Left cardiac atrium (tissue), 4 donors: ENCODE measurements at regions of chr4 and their contacts with region 1.

Region 1: GRCh38 chr4:81405894-81406401 is 65.8 kb downstream of the RASGEF1B start:
- DNase-seq: no peak
- ATAC-seq: peak; percentile 85 to 92

Region 2: DNA sequence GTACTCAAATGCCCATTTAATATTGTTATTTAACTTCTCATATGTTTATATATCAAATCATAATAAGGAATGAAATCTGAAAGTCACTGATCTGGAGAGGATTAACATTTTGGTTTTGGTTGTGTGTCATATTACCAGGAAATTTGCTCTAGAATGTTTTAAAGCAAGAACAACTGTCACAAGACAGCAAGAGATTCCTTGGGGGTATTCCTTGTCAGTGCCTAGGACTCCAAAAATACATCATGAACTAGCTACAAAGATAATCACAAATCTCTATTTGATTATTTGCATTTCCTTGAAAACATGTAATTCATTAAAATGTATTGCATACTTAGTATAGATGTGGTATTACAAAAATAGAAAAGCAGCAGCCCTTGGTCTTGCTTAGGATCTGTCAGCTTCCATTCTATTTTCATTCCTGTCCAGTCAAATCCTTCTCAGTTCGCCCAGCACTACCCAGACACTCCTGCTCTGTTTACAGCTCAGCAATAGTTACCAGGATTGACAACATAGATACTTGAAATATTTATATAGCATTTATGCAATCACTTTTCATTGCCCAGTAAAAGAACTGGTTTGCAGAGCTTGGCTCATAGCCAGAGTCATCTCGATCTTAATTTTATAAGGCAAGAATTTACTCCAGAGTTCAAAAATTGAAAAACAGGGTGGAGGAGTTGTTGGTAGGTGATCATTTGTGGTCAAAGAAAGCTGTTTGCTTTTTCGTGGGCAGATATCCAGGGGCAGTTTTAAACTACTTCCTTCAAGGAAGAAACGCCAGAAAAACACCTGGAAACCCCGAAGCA is 384.6 kb before region 1 on chr4:
- intact Hi-C with region 1: no loop called
- DNase-seq: no peak
- ATAC-seq: no peak

Region 3: GRCh38 chr4:81647388-81647787 is 241.4 kb after region 1 on chr4:
- intact Hi-C with region 1: no loop called
- DNase-seq: no peak
- ATAC-seq: no peak

Region 4: DNA sequence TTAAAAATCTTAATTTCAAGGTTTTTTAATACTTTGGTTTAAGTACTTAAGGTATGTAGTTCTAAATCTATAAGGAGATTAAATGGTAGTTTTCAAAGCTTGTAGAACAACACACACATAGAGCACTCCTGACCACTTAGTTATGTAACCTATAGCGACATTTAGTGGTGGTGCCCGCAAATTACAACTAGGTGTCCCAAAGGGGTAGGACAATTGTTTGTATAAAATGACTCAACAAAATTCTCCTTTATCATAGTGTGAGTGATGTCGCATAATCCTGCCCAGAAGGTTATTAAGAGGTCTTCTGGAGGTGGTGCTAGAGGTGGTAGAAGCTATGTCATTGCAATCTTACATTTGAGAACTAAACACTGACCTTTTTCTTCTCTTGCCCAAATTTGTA is 438.8 kb after region 1 on chr4:
- intact Hi-C with region 1: loop called (anchors 5 kb)
- DNase-seq: peak; percentile 69
- ATAC-seq: peak; percentile 84 to 95

Region 5: DNA sequence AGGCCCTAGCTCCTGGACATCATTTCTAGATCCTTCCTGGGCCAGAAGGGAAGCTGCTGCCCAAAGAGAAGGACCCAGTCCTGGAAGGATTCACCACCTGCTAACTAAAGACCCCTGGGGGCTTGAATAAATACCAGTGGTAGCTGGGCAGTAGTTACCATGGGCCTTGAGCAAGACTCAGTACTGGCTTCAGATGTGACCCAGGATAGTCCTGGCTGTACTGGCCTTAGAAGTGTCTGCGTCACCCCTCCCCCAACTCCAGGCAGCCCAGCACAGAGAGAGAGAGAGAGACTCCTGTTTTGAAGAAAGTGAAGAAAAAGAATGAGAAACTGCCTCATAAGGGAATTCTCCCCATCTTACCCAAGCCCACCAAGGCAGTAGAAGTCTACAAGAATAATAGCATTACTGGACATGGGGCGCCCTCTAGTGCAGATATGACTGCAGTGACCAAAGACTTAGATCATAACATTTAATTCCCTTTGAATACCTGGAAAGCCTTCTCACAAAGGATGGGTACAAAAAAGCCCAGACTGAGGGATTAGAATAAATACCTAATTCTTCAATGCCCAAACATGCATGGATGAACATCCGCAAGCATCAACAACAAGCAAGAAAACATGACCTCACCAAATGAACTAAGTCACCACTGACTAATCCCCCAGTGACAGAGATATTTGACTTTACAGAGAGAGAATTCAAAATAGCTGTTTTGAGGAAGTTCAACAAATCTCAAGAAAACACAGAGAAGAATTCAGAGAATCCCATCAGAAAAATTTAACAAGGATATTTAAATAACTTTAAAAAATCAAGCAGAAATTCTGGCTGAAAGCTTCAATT is 796.1 kb after region 1 on chr4:
- intact Hi-C with region 1: loop called (anchors 2 to 5 kb)
- DNase-seq: peak; percentile 36
- ATAC-seq: no peak

Region 6: DNA sequence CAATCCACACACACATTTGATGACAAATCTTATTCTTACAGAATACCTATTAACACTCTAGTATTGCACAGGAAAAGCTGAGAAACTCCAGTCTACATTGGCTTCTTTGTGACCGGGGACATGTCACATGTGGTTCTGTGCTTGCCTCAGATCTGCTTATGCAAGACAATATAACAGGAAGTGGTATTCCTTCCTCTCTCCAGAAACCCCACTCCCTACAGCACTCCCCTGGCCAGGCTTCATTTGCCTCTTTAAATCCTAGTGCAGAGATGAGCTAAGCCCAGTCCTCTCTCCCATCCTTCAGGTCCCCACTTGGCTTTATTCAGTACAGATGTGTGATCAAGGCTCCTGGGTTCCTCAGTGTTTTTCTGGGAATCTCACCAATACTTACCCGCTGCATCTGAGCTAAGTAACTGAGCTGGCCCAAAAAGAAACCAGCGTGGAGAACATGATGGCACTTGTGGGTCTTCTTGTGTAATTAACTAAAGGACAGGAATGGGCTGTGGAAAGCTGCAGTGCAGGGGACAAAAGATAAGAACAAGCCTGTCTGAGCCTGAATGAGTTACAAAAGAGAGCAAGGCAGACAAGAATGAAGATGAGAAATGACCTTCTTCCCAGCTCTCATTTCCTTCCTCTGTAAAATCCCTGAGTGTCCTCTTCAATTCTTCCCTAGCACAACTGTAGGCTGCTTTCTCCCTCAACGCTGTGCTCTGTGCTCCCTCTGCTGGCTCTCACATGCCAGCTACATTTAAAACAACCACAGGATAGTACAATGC is 862.3 kb after region 1 on chr4:
- intact Hi-C with region 1: loop called in 1 of 2 experiments (anchors 2 kb)
- DNase-seq: peak; percentile 46
- ATAC-seq: peak; percentile 97 to 98